Activated CD4-positive, alpha-beta T cell treated with anti-CD3 and anti-CD28 coated beads, Interleukin-2, amount 10 ng/mL, durations not matched to agents 24 days and 14 days (primary cell): ENCODE measurements at regions of chr5 and their contacts with region 1.

Region 1: GRCh38 chr5:142800776-142801494 is 30.8 kb downstream of the ARHGAP26 start:
- DNase-seq: peak; percentile 87
- H3K4me3 Mint-ChIP-seq: peak overlapping the region; percentile 79
- H3K27ac Mint-ChIP-seq: peak overlapping the region; percentile 92
- H3K4me1 Mint-ChIP-seq: peaks cover 54% of the 10 kb centered on the region
- H3K27me3 Mint-ChIP-seq: no peaks in the 10 kb centered on the region

Region 2: DNA sequence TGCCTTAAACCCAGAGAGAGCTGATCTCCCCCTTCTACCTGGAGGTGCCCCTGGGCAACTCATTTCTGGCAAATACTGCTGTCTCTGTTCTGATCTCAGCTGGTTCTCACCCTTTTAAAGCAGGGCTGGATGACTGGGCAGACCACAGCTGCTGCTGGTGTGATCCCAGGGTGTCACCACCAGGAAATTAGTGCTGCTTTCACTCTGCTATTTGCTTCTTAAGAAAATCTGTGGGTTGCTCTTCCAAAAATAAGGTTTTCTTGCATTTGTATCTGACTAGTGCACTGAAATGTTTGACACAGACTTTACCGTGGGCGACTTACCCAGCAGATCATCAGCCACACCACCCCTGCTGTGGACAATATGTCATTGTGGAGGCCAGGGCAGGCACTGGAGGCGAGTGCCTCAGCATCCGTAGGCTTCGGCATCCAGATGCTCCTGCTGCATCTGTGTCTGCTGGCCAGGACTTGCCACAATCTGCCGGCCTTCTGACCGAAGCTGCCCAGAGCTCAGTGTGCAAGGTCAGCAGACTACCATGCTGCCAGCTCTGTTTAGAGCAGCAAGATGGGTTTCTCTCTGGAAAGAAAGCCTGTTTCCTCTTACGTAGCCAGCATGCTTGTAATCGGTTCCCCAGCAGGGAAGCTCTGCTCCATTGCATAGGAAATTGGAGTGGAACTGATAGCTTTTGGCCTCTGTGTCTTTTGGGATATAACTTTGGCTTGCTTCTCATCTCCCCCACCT is 17.2 kb before region 1 on chr5:
- intact Hi-C with region 1: loop called (anchors 1 kb)
- DNase-seq: peak; percentile 82
- H3K4me3 Mint-ChIP-seq: peak overlapping the region; percentile 5
- H3K27ac Mint-ChIP-seq: peak overlapping the region; percentile 71
- H3K4me1 Mint-ChIP-seq: peaks cover 40% of the 10 kb centered on the region
- H3K27me3 Mint-ChIP-seq: no peaks in the 10 kb centered on the region